CD4-positive, alpha-beta T cell (primary cell): ENCODE measurements at regions of chrX and their contacts with region 1.

Region 1: DNA sequence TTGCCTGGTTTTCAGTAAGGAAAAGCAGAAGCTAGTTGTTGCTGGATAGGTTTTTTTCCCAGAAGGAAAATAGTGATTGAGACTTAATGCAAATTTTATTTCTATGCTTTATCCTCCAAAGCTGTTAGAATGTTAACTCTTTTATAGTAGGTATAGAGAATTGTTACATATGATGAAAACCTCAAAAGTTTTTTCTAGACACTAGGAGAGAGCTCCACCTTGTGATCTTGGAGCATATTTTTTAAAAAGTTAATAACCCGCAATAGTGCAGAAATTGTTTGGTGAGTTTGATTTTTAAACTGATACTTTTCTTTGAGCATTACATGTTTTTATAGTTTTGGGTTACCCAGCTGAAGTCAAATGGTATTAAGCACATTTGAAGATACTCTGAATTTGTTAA is 56.5 kb downstream of the STAG2 start:
- DNase-seq: peak in 3 of 14 experiments; percentile 14 to 24 (median 20)
- ATAC-seq: peak; percentile 55
- H3K4me3 ChIP-seq: no peak overlapping the region
- H3K4me3 Mint-ChIP-seq: no peak overlapping the region
- H3K27ac ChIP-seq: no peak overlapping the region
- H3K27ac Mint-ChIP-seq: peak overlapping the region; percentile 64
- H3K4me1 ChIP-seq: peaks cover 9% of the 10 kb centered on the region
- H3K4me1 Mint-ChIP-seq: peaks cover 50% of the 10 kb centered on the region
- H3K27me3 ChIP-seq: no peaks in the 10 kb centered on the region
- H3K27me3 Mint-ChIP-seq: no peaks in the 10 kb centered on the region
- CTCF ChIP-seq: peak; percentile 35

Region 2: DNA sequence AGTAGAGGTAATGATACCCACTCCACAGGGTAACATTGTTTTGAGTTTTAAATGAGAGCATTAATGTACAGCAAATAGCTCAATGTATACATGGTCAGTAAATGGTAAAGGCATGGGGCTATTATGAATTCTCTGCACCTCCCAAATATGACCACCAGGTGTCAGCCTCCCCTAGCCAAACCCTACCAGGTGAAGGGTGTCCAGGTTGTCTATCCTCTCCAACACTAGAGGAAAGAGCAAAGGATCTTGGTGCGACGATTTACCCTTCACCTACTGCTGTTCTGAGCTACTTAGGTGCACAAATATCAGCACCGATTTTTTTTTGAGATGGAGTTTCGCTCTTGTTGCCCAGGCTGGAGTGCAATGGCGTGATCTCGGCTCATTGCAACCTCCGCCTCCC is 184.6 kb before region 1 on chrX:
- CTCF ChIA-PET with region 1: no interaction called
- POLR2A ChIA-PET with region 1: no interaction called
- intact Hi-C with region 1: loop called (anchors 10 kb)
- DNase-seq: peak; percentile 22 to 76 (median 46)
- ATAC-seq: peak; percentile 94
- H3K4me3 ChIP-seq: no peak overlapping the region
- H3K4me3 Mint-ChIP-seq: no peak overlapping the region
- H3K27ac ChIP-seq: no peak overlapping the region
- H3K27ac Mint-ChIP-seq: no peak overlapping the region
- H3K4me1 ChIP-seq: no peaks in the 10 kb centered on the region
- H3K4me1 Mint-ChIP-seq: no peaks in the 10 kb centered on the region
- H3K27me3 ChIP-seq: no peaks in the 10 kb centered on the region
- H3K27me3 Mint-ChIP-seq: peaks cover 3% of the 10 kb centered on the region
- CTCF ChIP-seq: peak; percentile 61

Region 3: GRCh38 chrX:123884809-123885408 is 133.1 kb before region 1 on chrX:
- CTCF ChIA-PET with region 1: no interaction called
- POLR2A ChIA-PET with region 1: no interaction called
- intact Hi-C with region 1: loop called in 1 of 2 experiments (anchors 5 kb)
- DNase-seq: peak in 7 of 14 experiments; percentile 2 to 72 (median 43)
- ATAC-seq: peak; percentile 73
- H3K4me3 ChIP-seq: no peak overlapping the region
- H3K4me3 Mint-ChIP-seq: no peak overlapping the region
- H3K27ac ChIP-seq: no peak overlapping the region
- H3K27ac Mint-ChIP-seq: peak overlapping the region; percentile 36
- H3K4me1 ChIP-seq: no peaks in the 10 kb centered on the region
- H3K4me1 Mint-ChIP-seq: peaks cover 12% of the 10 kb centered on the region
- H3K27me3 ChIP-seq: no peaks in the 10 kb centered on the region
- H3K27me3 Mint-ChIP-seq: no peaks in the 10 kb centered on the region
- CTCF ChIP-seq: peak; percentile 68

Region 4: DNA sequence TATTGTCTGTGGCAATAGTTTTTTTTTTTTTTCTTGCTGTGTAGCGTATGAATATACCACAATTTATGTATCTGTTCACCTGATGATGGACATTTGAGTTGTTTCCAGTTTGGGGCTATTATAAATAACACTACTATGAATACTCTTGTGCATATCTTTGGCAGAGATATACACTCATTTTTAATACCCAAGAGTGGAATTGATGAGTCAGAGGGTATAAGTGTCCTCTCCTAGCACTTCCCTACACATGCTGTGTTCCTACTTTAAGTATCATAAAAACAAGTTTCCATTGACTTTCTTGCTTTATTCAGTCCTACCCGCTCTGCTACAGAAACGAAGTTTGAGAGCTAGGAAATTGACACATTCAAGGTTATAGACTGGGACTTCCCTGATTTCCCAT is 118.3 kb before region 1 on chrX:
- CTCF ChIA-PET with region 1: no interaction called
- POLR2A ChIA-PET with region 1: no interaction called
- intact Hi-C with region 1: no loop called
- DNase-seq: no peak
- ATAC-seq: no peak
- H3K4me3 ChIP-seq: no peak overlapping the region
- H3K4me3 Mint-ChIP-seq: no peak overlapping the region
- H3K27ac ChIP-seq: no peak overlapping the region
- H3K27ac Mint-ChIP-seq: no peak overlapping the region
- H3K4me1 ChIP-seq: no peaks in the 10 kb centered on the region
- H3K4me1 Mint-ChIP-seq: no peaks in the 10 kb centered on the region
- H3K27me3 ChIP-seq: no peaks in the 10 kb centered on the region
- H3K27me3 Mint-ChIP-seq: no peaks in the 10 kb centered on the region
- CTCF ChIP-seq: no peak

Region 5: GRCh38 chrX:123983240-123983639 is 34.8 kb before region 1 on chrX:
- CTCF ChIA-PET with region 1: interaction called, 4 read pairs
- POLR2A ChIA-PET with region 1: no interaction called
- intact Hi-C with region 1: loop called (anchors 5 kb)
- DNase-seq: no peak
- ATAC-seq: no peak
- H3K4me3 ChIP-seq: no peak overlapping the region
- H3K4me3 Mint-ChIP-seq: no peak overlapping the region
- H3K27ac ChIP-seq: no peak overlapping the region
- H3K27ac Mint-ChIP-seq: peak overlapping the region; percentile 90
- H3K4me1 ChIP-seq: peaks cover 17% of the 10 kb centered on the region
- H3K4me1 Mint-ChIP-seq: peaks cover 71% of the 10 kb centered on the region
- H3K27me3 ChIP-seq: no peaks in the 10 kb centered on the region
- H3K27me3 Mint-ChIP-seq: no peaks in the 10 kb centered on the region
- CTCF ChIP-seq: no peak